Posterior cingulate gyrus (tissue), 11 donors: ENCODE measurements at regions of chr17 and their contacts with region 1.

Region 1: GRCh38 chr17:66255112-66255511 is 25.9 kb upstream of the APOH start:
- DNase-seq: peak in 1 of 10 donors; percentile 22

Region 2: GRCh38 chr17:66567234-66568170 is 312.4 kb after region 1 on chr17:
- intact Hi-C with region 1: loop called (anchors 5 kb)
- DNase-seq: peak; percentile 51 to 96 (median 76)

Region 3: DNA sequence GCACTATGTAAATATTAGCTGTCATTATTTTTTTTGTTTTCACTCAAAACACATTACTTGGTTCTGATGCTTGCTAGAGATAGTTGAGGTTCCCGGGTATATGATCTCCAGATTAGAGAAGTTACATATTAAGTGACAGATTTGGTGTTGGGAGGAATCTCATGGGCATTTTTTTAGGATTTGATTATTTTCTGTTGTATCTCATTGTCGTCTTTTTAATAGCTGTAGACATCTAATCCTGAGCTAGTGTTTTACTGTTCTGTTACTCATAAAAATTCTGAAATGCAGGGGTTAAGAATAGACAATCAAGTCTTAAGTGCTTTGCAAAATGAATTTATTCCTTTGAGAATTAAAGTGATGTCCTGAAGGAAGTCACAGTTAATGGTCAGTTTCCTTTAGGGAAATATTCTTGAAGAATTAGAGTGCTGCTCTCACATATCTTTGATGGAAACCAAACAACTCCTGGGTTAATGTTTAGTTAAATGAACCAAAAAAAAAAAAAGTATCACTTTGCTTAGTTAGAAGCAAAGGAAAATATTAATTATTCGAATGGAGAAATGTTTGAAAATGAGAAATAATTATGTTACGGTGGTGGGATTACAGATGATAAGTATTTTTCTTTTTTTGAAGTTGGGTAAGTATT is 328.1 kb after region 1 on chr17:
- intact Hi-C with region 1: no loop called
- DNase-seq: no peak

Region 4: GRCh38 chr17:66625311-66625775 is 370.2 kb after region 1 on chr17:
- intact Hi-C with region 1: loop called (anchors 1 kb)
- DNase-seq: no peak

Region 5: DNA sequence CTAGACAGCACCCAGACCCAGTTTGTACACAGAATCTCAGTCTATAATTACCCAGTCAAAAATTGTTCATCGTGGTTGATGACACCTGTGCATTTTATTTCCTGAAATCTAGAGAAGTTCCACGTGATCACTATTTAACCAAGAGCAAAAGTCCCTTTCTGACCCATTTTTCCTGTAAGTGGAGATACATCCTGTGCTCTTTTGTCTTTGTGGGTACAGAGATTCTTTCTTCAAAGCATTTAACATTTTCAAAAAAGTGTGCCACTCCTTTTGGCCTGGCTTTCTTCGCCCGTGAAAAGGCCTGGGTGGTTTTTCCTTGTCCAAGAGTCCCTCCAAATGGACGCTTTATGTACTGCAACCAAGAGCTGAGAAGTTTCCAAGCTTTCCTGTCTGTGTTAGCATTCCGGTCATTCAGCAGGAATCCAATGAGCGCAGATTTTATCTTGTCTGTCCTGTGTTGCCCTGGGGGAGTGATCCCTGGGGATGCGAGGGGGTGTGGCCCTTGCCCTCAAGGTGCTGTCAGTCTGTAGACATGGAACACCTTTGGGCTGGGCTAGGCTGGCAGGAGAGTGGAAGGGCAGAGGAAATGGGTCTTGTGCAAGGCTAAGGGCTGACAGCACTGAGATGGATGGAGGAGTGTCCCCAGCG is 418.7 kb after region 1 on chr17:
- intact Hi-C with region 1: loop called (anchors 2 kb)
- DNase-seq: peak in 6 of 10 donors; percentile 38 to 63 (median 48)